ENCODE measurements at regions of chr1 and their contacts with region 1.

Region 1: DNA sequence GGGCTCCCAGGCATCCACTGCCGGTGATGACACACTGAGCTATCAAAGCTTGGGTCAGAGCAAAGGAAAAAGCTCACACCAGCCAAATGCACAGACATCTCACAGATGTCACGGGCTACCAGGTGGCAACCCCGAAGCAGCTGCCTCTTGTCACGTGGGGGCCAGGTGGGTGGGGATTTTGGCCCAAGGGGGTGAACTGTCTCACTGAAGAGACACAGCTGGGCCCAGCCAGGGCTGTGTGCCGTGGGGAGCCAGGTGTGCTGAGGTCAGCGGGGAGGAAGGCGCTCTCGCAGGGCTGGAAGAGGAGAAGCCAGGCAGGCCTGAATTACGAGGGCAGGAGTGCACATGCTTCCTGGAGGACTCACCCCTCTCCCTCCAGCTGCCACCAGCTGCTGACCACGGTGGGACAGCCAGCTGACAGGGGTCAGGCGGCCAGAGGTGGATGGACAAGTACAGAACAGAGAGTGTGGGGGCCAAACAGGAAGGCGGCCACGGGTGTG is 32.4 kb downstream of the KCNN3 start:
- DNase-seq: no peak
- ATAC-seq: peak; percentile 84
- H3K4me3 ChIP-seq: no peak overlapping the region
- H3K27ac ChIP-seq: no peak overlapping the region
- H3K4me1 ChIP-seq: peaks cover 33% of the 10 kb centered on the region
- H3K27me3 ChIP-seq: no peaks in the 10 kb centered on the region
- CTCF ChIP-seq: no peak
- EP300 ChIP-seq: peak in 1 of 2 experiments; percentile 73; a peak in 2 of 4 replicates
- POLR2A ChIP-seq: peak; percentile 47; the same call in 1 of the 2 replicates
- RAD21 ChIP-seq: no peak

Region 2: GRCh38 chr1:154819628-154820590 is 17.8 kb before region 1 on chr1:
- CTCF ChIA-PET with region 1: interaction called, 13 read pairs
- POLR2A ChIA-PET with region 1: interaction called, 3 read pairs
- RAD21 ChIA-PET with region 1: interaction called, 3 read pairs
- SMC1A ChIA-PET with region 1: interaction called, 6 read pairs
- in situ Hi-C with region 1: no loop called
- intact Hi-C with region 1: no loop called
- DNase-seq: no peak
- ATAC-seq: peak; percentile 83
- H3K4me3 ChIP-seq: no peak overlapping the region
- H3K27ac ChIP-seq: peak overlapping the region; percentile 10; the same call in 1 of the 2 replicates
- H3K4me1 ChIP-seq: peaks cover 35% of the 10 kb centered on the region
- H3K27me3 ChIP-seq: no peaks in the 10 kb centered on the region
- CTCF ChIP-seq: peak; percentile 11 to 59 (median 48)
- EP300 ChIP-seq: no peak
- POLR2A ChIP-seq: no peak
- RAD21 ChIP-seq: peak; percentile 47

Region 3: DNA sequence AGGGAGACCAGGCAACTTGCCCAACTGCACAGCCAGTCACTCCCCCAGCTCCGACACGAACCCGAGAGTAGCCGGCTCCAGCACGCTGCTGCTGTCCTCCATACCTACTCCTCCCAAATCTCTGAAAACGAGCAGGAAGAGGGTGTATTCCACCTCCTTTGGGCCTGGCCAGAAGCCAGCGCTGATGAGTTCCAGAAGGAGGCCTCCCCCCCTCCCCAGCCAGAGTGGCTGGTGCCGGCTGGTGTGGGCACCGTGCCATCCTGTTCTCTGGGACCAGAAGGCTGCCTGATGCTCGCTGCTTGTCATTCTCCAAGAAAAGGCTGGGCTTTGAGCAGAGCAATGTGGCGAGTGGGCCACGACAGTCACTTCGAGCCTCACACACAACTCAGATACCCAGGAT is 10.2 kb after region 1 on chr1:
- CTCF ChIA-PET with region 1: interaction called, 4 read pairs
- POLR2A ChIA-PET with region 1: interaction called, 10 read pairs
- RAD21 ChIA-PET with region 1: interaction called, 4 read pairs
- SMC1A ChIA-PET with region 1: interaction called, 19 read pairs
- in situ Hi-C with region 1: no loop called
- intact Hi-C with region 1: no loop called
- DNase-seq: no peak
- ATAC-seq: no peak
- H3K4me3 ChIP-seq: no peak overlapping the region
- H3K27ac ChIP-seq: no peak overlapping the region
- H3K4me1 ChIP-seq: peaks cover 52% of the 10 kb centered on the region
- H3K27me3 ChIP-seq: no peaks in the 10 kb centered on the region
- CTCF ChIP-seq: no peak
- EP300 ChIP-seq: no peak
- POLR2A ChIP-seq: no peak
- RAD21 ChIP-seq: no peak

Region 4: DNA sequence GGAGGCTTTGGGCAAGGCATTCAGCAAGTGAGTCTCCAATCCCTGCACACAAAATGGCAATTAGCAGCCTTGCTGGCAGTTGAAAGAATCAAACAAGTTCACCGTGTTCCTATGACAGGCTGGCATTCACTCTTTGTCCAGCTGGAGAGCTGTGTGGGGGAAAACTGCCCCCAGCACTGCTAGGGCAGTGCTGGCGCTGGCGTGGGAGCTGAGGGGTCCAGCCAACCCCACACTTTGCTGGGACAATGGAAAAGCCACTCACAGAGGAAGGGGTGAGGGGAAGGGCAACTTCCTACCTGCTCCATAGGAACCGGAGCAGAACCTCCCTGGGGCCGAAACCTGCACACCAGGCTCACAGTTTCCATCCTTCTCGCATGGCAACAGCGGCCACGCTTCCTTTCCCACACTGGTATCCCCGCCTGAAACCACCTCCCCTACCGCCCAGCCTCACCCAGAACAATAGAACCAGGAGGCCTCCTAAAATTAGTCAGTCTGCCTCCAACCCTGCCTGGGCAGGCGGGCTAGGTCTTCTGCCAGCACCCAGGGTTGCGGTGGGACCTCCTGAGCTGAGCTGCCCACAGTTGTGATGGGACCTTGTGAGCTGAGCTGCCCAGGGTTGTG is 59.2 kb after region 1 on chr1:
- CTCF ChIA-PET with region 1: no interaction called
- POLR2A ChIA-PET with region 1: no interaction called
- RAD21 ChIA-PET with region 1: no interaction called
- SMC1A ChIA-PET with region 1: no interaction called
- in situ Hi-C with region 1: no loop called
- intact Hi-C with region 1: no loop called
- DNase-seq: no peak
- ATAC-seq: no peak
- H3K4me3 ChIP-seq: no peak overlapping the region
- H3K27ac ChIP-seq: no peak overlapping the region
- H3K4me1 ChIP-seq: no peaks in the 10 kb centered on the region
- H3K27me3 ChIP-seq: no peaks in the 10 kb centered on the region
- CTCF ChIP-seq: no peak
- EP300 ChIP-seq: no peak
- POLR2A ChIP-seq: no peak
- RAD21 ChIP-seq: no peak

Measured in GM12878 (cell line).